ENCODE measurements at regions of chr10 and their contacts with region 1.

Region 1: DNA sequence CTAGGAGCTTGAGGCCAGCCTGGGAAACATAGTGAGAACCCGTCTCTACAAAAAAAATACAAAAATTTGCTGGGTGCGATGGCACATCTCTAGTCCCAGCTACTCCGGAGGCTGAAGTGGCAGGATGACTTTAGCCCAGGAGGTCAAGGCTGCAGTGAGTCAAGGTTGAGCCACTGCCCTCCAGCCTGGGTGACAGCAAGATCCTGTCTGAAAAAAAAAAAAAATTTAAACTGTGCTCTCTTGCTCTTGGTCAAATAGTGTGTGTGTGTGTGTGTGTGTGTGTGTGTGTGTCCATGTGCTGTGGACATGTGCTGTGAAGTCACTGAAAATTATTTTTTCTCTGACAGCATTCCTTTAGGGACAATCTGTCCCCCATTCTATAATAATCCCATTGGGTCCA is 62.1 kb upstream of the TCF7L2 start:
- DNase-seq: no peak
- H3K4me3 ChIP-seq: no peak overlapping the region
- H3K27me3 ChIP-seq: peaks cover 6% of the 10 kb centered on the region
- CTCF ChIP-seq: no peak

Region 2: GRCh38 chr10:112904000-112904399 is 16.0 kb after region 1 on chr10:
- CTCF ChIA-PET with region 1: no interaction called
- POLR2A ChIA-PET with region 1: no interaction called
- DNase-seq: no peak
- H3K4me3 ChIP-seq: no peak overlapping the region
- H3K27me3 ChIP-seq: no peaks in the 10 kb centered on the region
- CTCF ChIP-seq: no peak

Region 3: DNA sequence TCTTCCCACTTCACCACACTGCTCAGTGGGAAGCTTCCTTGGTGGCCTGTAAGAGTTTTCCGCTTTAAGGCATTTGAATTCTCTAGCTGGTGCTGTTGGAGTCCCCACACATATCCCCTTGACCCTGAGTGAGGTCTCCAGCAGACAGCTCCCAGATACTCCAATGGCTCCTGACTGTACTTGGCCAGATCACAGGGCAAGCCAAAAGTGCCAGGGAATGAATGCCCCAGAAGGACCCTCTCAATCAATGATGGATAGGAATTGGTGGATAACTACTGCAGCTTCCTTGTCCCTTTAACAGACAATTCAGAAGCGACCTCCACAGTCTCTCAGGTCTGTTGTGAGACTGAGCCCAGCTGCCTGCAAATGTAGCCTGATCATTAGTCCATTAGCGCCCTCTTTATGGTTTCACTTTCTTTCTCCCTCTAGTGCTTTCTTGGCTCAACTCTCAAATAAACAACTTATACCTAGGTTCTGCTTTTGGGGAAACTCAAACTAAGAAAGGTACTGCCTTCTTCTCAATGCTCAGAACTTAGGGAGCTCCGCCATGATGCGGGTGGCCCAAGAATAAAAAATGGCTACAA is 345.1 kb after region 1 on chr10:
- CTCF ChIA-PET with region 1: no interaction called
- POLR2A ChIA-PET with region 1: interaction called, 23 read pairs
- DNase-seq: no peak
- H3K4me3 ChIP-seq: no peak overlapping the region
- H3K27me3 ChIP-seq: peaks cover 6% of the 10 kb centered on the region
- CTCF ChIP-seq: no peak

Measured in BJ (cell line).